Right cardiac atrium (tissue), 5 donors: ENCODE measurements at regions of chr17 and their contacts with region 1.

Region 1: DNA sequence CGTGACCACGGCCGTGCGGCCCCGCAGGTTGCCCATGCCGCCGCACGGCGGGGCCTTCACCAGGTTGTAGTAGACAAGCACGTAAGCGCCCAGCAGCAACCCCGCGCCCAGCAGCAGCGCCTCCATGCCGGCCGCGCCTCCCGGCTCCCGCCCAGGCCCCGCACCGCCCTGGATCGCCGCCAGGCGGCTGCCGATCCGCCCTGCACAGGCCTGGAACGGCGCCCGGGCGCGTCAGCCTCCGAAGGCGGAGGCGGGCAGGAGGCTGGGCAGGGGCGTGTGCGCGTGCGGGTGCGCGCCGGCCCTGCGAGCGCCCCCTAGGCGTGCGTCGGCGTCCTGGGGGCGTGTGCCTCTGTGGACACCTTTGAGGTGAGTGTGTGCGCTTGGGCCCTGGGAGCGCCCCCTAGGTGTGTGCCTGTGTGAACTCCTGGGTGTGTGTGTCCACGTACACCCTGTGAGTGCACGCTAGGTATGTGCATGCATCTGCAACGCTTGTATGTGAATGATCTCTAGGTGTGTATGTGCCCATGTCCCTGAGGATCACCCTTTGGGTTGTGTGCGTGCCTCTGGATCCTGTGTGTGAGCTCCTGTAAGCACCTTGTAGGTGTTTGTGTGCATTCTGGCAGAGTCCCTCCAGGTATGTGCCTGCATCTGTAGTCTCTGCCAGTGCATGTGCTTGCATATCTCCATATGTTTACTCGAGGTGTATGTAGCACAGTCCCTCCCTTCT is at the start of gene DHRS13:
- DNase-seq: peak; percentile 90 to 96 (median 96)
- ATAC-seq: peak; percentile 88 to 92
- H3K4me3 ChIP-seq: peak within 1 kb of the TSS; percentile 51
- H3K27ac ChIP-seq: peak within 1 kb of the TSS; percentile 14
- H3K4me1 ChIP-seq: peaks cover 2% of the 10 kb centered on the region
- H3K27me3 ChIP-seq: no peaks in the 10 kb centered on the region
- total RNA-seq, gene DHRS13: 2.1 to 3.3 (median 2.5) TPM

Region 2: DNA sequence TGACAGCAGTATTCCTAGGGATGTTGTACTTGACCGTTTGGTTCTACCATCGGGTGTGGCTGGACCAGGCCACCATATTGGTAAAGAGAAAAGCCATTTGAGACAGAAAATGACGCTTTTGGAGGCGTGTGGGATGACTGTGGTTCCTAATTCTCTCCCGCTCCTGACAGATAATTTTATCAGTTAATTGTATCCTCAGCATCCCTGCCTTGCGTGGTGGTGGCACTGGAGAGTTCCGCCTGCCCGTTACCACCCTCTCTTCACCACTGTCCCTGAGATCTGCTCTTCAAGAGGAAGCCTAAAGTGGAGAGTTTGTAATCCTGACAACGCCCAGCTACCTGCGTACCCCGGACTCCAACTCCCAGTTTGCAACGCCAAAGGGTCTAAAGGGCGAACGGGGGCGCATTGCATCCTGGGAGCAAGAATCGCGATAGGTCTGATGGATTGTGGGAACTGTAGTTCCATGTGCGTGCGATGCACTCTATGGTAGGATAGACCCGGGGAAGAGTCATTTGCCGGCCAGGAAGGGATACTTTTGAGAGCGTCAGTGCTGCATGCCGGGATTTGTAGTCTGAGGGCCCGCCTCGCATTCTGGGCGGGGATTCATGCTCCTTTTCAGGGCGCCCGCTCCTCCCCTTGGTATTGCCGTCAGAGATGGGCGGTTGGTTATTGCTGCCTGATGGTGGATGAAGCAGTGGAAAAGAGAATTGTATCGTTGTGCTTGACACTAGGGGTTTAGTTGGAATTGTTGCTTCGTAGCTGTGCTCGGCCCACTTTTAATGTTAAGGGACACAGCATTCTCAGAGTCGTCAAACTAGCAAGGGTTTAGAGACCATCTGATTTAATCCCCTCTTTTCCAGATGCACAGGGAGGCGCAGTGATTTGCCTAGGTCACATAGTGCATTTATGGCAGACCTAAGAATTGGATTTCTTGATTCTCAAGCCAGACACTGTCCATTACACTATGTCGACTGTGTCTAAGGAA is 49.3 kb after region 1 on chr17:
- intact Hi-C with region 1: loop called in 1 of 4 experiments (anchors 5 kb)
- DNase-seq: peak; percentile 96 to 99 (median 97)
- ATAC-seq: peak; percentile 89 to 91
- H3K4me3 ChIP-seq: peak overlapping the region; percentile 66
- H3K27ac ChIP-seq: peak overlapping the region; percentile 99
- H3K4me1 ChIP-seq: no peaks in the 10 kb centered on the region
- H3K27me3 ChIP-seq: no peaks in the 10 kb centered on the region